Left cardiac atrium (tissue), 4 donors: ENCODE measurements at regions of chr7 and their contacts with region 1.

Region 1: DNA sequence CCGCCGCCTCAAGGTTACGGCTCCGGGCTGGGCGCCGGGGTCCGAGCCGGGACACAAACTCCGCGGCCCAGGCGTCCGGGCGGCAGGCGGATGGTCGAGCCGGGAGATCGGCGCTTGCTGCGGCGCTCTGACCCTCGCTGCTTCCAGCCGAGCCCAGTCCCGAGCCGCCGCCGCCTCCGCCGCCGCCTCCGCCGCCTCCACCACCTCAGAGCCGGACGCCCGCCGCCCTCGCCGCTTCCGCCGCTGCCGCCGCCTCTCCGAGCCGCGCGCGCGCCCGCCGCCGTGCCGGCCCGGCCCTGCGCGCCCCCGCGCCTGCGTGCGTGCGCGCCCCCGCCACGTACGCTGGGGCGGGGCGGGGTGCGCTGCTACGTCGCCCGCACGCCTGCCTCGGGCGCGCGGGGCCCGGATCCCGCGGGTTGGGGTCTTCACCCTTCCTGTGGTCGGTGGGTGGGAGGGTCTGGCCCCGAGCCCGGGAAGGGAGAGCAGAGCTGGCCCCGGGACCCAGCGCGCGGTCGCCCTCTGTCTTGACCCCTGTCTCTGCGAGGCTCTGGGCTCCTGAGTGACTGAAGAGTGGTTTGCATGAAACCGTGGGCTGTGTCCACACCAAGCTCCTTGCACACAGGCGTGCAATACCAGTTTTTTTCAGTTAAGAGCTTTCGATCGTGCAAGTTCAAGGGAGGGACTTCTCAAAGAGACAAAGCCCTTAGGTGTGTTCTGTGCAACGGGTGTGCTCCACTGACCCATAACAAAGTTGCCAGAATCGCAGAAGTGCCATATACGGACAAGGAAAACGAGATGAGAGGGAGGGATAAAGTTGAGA is at the start of gene SMURF1:
- DNase-seq: peak; percentile 75
- ATAC-seq: peak; percentile 60 to 83
- total RNA-seq, gene SMURF1: 11.2 to 15.7 TPM

Region 2: DNA sequence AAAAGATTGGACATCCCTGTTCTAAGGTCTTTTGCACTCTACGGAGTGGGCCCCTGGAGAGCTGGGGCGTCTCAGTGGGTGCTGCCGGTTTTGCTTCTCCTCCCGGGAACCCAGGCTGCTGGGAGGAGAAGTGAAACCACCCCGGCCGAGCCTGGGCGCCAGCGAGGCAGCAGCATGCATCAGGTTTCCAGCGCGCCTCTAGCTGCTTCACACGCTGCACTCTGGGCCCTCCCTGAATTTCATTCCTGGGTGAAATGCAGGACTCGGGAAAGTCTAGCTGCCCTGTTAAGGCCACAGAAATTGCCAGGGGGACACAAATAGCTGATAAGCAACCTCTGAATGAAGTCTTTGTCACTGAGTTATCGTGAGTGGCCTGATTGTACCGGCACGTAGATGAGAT is 138.3 kb before region 1 on chr7:
- intact Hi-C with region 1: no loop called
- DNase-seq: no peak
- ATAC-seq: no peak

Region 3: GRCh38 chr7:99050971-99051370 is 93.1 kb before region 1 on chr7:
- intact Hi-C with region 1: loop called (anchors 10 kb)
- DNase-seq: no peak
- ATAC-seq: no peak

Region 4: GRCh38 chr7:99331002-99331401 is 186.9 kb after region 1 on chr7:
- intact Hi-C with region 1: no loop called
- DNase-seq: no peak
- ATAC-seq: peak in 1 of 2 donors; percentile 25